Mammary epithelial cell (primary cell): ENCODE measurements at regions of chr13 and their contacts with region 1.

Region 1: GRCh38 chr13:45807520-45808099 is 43.9 kb downstream of the SIAH3 start:
- DNase-seq: peak; percentile 61
- H3K4me3 ChIP-seq: no peak overlapping the region
- H3K27ac ChIP-seq: no peak overlapping the region
- H3K4me1 ChIP-seq: peaks cover 15% of the 10 kb centered on the region
- H3K27me3 ChIP-seq: peaks cover 2% of the 10 kb centered on the region
- CTCF ChIP-seq: peak; percentile 78 to 81

Region 2: DNA sequence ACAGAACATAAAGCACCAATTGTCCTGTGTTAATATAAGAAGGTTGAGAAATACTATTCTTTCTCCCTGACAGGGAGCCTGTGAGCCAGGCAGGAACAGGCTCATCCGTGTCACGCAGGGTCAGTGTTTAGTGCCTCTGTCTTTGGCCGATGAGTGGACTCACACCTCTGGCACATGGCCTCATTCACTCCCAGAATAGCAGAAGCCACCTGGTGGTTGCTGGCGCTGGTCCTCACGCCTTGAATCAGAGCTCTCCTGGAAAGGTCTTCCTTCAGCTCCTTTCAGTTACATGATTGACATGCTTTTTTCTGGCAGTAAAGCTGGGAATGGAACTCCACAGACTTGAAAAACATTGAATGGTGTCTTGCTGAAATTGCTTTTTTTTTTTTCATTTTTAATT is 72.1 kb after region 1 on chr13:
- CTCF ChIA-PET with region 1: interaction called, 7 read pairs
- dilution Hi-C with region 1: no loop called
- in situ Hi-C with region 1: no loop called
- intact Hi-C with region 1: loop called (anchors 1 kb)
- DNase-seq: peak; percentile 60
- H3K4me3 ChIP-seq: no peak overlapping the region
- H3K27ac ChIP-seq: no peak overlapping the region
- H3K4me1 ChIP-seq: peaks cover 20% of the 10 kb centered on the region
- H3K27me3 ChIP-seq: no peaks in the 10 kb centered on the region
- CTCF ChIP-seq: peak; percentile 61 to 74

Region 3: GRCh38 chr13:46119883-46120614 is 312.4 kb after region 1 on chr13:
- CTCF ChIA-PET with region 1: interaction called, 4 read pairs
- dilution Hi-C with region 1: no loop called
- in situ Hi-C with region 1: loop called in 1 of 2 experiments (anchors 5 kb)
- intact Hi-C with region 1: no loop called
- DNase-seq: peak; percentile 39
- H3K4me3 ChIP-seq: no peak overlapping the region
- H3K27ac ChIP-seq: no peak overlapping the region
- H3K4me1 ChIP-seq: peaks cover 12% of the 10 kb centered on the region
- H3K27me3 ChIP-seq: no peaks in the 10 kb centered on the region
- CTCF ChIP-seq: no peak

Region 4: GRCh38 chr13:46288570-46289259 is 481.1 kb after region 1 on chr13:
- CTCF ChIA-PET with region 1: no interaction called
- dilution Hi-C with region 1: no loop called
- in situ Hi-C with region 1: no loop called
- intact Hi-C with region 1: loop called (anchors 1 kb)
- DNase-seq: peak; percentile 38
- H3K4me3 ChIP-seq: no peak overlapping the region
- H3K27ac ChIP-seq: no peak overlapping the region
- H3K4me1 ChIP-seq: no peaks in the 10 kb centered on the region
- H3K27me3 ChIP-seq: peaks cover 5% of the 10 kb centered on the region
- CTCF ChIP-seq: peak; percentile 74 to 84